A549 (cell line): ENCODE measurements at regions of chr10 and their contacts with region 1.

Region 1: DNA sequence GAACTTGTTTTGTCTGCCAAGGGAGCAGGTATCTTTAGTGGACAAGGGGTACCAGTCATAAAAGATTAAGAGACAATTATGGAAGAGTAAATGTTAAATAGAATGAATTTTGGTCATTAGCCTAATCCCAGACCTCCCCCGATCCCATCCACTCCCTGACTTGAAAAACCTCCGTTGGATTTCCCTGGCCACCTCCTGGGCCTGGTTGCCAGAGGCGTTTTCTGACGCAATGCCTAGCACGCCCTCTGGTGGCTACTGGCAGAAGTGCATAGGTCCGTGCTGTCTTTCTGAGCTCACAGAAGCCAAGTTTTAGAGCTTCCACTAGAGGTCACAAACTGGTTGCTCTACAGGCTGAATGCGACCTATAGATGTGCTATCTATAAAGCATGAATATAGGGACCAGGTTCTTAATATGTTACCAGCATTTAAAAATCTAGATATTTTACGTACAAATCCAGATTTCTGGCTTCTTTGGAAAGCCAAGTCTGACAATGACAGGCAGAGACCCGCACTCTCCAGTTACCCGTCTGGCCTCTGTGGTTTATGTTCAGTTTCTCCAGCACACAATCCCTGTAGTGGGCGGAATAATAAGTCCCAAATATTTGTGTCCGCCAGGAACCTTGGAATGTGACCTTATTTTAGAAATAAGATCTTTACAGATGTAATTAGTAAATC is 39.8 kb downstream of the SPOCK2 start:
- DNase-seq: peak; percentile 92 to 94
- ATAC-seq: peak; percentile 90 to 92
- H3K4me3 ChIP-seq: no peak overlapping the region
- H3K27ac ChIP-seq: peak overlapping the region; percentile 68 to 72
- H3K4me1 ChIP-seq: peaks cover 3% of the 10 kb centered on the region; the same call in 1 of the 3 replicates
- CTCF ChIP-seq: peak; percentile 100
- EP300 ChIP-seq: no peak
- POLR2A ChIP-seq: no peak
- RAD21 ChIP-seq: peak; percentile 98 to 99

Region 2: DNA sequence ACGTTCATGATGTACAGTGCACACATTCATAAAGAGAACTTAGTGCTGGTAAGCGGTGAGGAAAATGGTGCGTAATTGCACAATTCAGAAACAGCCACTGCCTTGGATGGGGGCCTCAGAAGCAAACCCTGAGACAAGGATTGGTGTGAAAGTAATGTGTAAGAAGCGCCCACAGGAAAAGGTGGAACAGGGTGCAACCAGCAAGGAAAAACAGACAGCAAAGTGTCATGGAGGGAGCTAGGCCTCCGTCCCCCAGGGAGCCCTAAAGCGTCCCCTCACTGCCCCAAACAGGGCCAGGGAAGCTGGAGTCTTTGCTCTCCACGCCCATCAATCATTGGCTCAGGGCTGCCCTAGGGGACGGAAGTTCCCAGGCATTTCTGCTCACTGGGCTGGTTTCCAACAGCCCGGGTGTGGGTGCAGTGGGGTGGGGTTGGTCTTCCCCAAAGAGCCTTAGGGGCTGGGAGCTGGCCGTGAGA is 319.4 kb before region 1 on chr10:
- CTCF ChIA-PET with region 1: no interaction called
- POLR2A ChIA-PET with region 1: no interaction called
- DNase-seq: peak; percentile 54 to 67
- ATAC-seq: peak; percentile 22 to 50; a peak in 3 of 6 replicates
- H3K4me3 ChIP-seq: no peak overlapping the region
- H3K27ac ChIP-seq: peak overlapping the region; percentile 38 to 79
- H3K4me1 ChIP-seq: peaks cover 33% of the 10 kb centered on the region
- CTCF ChIP-seq: no peak
- EP300 ChIP-seq: no peak
- POLR2A ChIP-seq: no peak
- RAD21 ChIP-seq: no peak

Region 3: GRCh38 chr10:71912431-71912830 is 136.2 kb before region 1 on chr10:
- CTCF ChIA-PET with region 1: interaction called, 16 read pairs
- POLR2A ChIA-PET with region 1: no interaction called
- DNase-seq: peak in 1 of 2 experiments; percentile 35
- ATAC-seq: peak; percentile 83 to 85
- H3K4me3 ChIP-seq: no peak overlapping the region
- H3K27ac ChIP-seq: no peak overlapping the region
- H3K4me1 ChIP-seq: 0 out of 3 replicates have a peak, but pooled peaks cover 3% of the 10 kb centered on the region
- CTCF ChIP-seq: no peak
- EP300 ChIP-seq: no peak
- POLR2A ChIP-seq: no peak
- RAD21 ChIP-seq: no peak

Region 4: GRCh38 chr10:71974489-71975021 is 74.0 kb before region 1 on chr10:
- CTCF ChIA-PET with region 1: interaction called, 17 read pairs
- POLR2A ChIA-PET with region 1: no interaction called
- DNase-seq: peak; percentile 80 to 84
- ATAC-seq: peak; percentile 65 to 69
- H3K4me3 ChIP-seq: no peak overlapping the region
- H3K27ac ChIP-seq: peak overlapping the region; percentile 87 to 98
- H3K4me1 ChIP-seq: peaks cover 100% of the 10 kb centered on the region
- CTCF ChIP-seq: no peak
- EP300 ChIP-seq: peak in 1 of 2 experiments; percentile 39; a peak in 1 of 5 replicates
- POLR2A ChIP-seq: no peak
- RAD21 ChIP-seq: no peak

Region 5: GRCh38 chr10:72013202-72013945 is 35.2 kb before region 1 on chr10:
- CTCF ChIA-PET with region 1: interaction called, 13 read pairs
- POLR2A ChIA-PET with region 1: no interaction called
- DNase-seq: no peak
- ATAC-seq: no peak
- H3K4me3 ChIP-seq: no peak overlapping the region
- H3K27ac ChIP-seq: no peak overlapping the region
- H3K4me1 ChIP-seq: peaks cover 8% of the 10 kb centered on the region; the same call in 1 of the 3 replicates
- CTCF ChIP-seq: no peak
- EP300 ChIP-seq: no peak
- POLR2A ChIP-seq: no peak
- RAD21 ChIP-seq: no peak

Region 6: DNA sequence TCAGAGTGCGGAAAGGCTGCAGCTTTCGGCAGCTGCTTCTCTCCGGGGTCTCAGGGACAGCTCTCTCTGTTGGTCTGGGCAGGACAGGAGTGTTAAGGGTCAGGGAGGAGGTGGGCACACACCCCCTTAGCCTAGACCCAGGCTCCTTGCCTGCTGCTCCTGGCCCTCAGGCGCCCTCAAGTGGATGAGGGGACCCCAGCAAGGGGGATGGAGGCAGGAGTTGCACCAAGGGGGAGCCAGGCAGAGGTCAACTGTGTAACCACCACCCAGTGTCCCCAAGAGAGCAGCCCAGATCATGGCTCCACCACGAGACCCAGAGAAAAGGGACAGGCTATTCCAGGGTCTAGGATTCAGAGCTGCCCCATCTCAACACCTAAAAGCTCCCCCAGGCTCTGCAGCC is 12.9 kb after region 1 on chr10:
- CTCF ChIA-PET with region 1: interaction called, 66 read pairs
- POLR2A ChIA-PET with region 1: no interaction called
- DNase-seq: no peak
- ATAC-seq: peak; percentile 62 to 76; a peak in 4 of 6 replicates
- H3K4me3 ChIP-seq: no peak overlapping the region
- H3K27ac ChIP-seq: peak overlapping the region in 1 of 2 experiments; percentile 57; a peak in 3 of 6 replicates
- H3K4me1 ChIP-seq: peaks cover 10% of the 10 kb centered on the region; the same call in 2 of the 3 replicates
- CTCF ChIP-seq: peak; percentile 30; the same call in 1 of the 3 replicates
- EP300 ChIP-seq: no peak
- POLR2A ChIP-seq: no peak
- RAD21 ChIP-seq: peak; percentile 32 to 58; a peak in 4 of 5 replicates

Region 7: DNA sequence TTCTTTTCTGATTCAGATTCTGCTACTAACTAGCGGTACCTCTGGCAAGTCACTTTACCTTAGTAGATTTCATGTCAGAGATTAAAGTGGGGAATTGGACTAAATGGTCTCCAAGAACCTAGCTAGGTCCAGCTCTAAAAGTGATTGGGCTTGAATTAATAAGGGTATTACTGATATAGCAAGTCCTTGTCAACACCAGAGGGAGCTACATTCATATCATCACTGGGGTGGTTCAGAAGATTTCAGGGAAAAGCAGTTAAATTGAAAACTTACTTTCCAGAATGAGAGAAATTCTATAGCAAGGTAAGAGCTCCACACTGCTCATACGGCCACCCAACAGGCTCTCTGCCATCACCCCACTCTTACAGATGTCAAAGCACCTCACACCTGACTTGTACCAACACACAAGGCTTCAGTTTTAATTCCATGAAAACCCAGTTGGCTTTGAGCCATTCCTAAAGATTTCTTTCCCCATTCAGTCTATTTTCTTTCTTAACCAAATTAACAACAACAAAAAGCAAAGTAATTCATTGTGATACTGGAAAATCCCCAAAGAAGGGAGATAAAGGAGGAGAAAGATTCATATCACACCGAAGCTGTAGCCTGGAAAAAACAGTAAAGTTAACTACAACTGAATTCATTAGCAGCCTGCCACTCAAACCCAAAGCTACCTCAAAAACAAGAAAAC is 77.7 kb after region 1 on chr10:
- CTCF ChIA-PET with region 1: interaction called, 10 read pairs
- POLR2A ChIA-PET with region 1: no interaction called
- DNase-seq: peak; percentile 58 to 73
- ATAC-seq: peak; percentile 62 to 84; a peak in 5 of 6 replicates
- H3K4me3 ChIP-seq: no peak overlapping the region
- H3K27ac ChIP-seq: peak overlapping the region; percentile 51 to 65
- H3K4me1 ChIP-seq: peaks cover 39% of the 10 kb centered on the region; the same call in 2 of the 3 replicates
- CTCF ChIP-seq: peak; percentile 85
- EP300 ChIP-seq: no peak
- POLR2A ChIP-seq: no peak
- RAD21 ChIP-seq: peak; percentile 85 to 88